Caco-2 (cell line): ENCODE measurements at regions of chr4 and their contacts with region 1.

Region 1: DNA sequence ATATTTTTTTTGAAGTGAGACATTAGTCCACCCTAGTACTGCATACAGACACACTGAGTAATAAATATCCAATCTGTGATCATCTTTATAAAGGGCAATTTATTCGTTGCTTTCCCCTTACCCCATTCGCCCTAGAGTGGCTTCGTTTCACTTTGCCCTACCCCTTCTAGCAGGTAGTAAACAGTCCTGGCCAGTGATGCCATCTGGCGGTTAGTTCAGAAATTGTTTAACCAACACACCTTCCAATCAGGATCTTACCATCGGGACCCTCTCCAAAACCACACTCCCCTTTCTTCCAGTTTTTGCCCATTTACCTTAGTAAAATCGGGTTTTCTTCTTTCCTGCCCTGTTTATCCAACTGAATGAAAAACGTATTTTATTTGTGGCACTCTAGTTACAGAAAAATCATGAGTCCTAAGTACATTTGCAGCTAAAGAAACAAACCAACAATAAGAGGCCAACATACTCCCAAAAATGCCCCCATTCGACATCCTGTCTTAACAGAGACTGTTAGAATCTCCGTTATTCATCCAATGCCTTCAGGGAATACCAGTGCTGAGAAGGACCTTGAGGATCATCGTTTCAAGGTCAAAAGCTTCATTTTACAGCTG is 2.2 kb downstream of the PPA2 start:
- DNase-seq: peak; percentile 69 to 74
- H3K4me3 ChIP-seq: no peak overlapping the region
- H3K4me3 Mint-ChIP-seq: peak overlapping the region; percentile 59
- H3K27ac Mint-ChIP-seq: no peak overlapping the region
- H3K4me1 ChIP-seq: peaks cover 9% of the 10 kb centered on the region
- H3K4me1 Mint-ChIP-seq: peaks cover 8% of the 10 kb centered on the region
- H3K27me3 ChIP-seq: no peaks in the 10 kb centered on the region
- H3K27me3 Mint-ChIP-seq: peaks cover 3% of the 10 kb centered on the region
- CTCF ChIP-seq: peak; percentile 50 to 57

Region 2: GRCh38 chr4:104901438-104901837 is 570.2 kb before region 1 on chr4:
- CTCF ChIA-PET with region 1: interaction called, 3 read pairs
- POLR2A ChIA-PET with region 1: no interaction called
- intact Hi-C with region 1: loop called (anchors 10 kb)
- DNase-seq: no peak
- H3K4me3 ChIP-seq: no peak overlapping the region
- H3K4me3 Mint-ChIP-seq: no peak overlapping the region
- H3K27ac Mint-ChIP-seq: no peak overlapping the region
- H3K4me1 ChIP-seq: no peaks in the 10 kb centered on the region
- H3K4me1 Mint-ChIP-seq: no peaks in the 10 kb centered on the region
- H3K27me3 ChIP-seq: no peaks in the 10 kb centered on the region
- H3K27me3 Mint-ChIP-seq: peaks cover under 1% of the 10 kb centered on the region
- CTCF ChIP-seq: no peak

Region 3: DNA sequence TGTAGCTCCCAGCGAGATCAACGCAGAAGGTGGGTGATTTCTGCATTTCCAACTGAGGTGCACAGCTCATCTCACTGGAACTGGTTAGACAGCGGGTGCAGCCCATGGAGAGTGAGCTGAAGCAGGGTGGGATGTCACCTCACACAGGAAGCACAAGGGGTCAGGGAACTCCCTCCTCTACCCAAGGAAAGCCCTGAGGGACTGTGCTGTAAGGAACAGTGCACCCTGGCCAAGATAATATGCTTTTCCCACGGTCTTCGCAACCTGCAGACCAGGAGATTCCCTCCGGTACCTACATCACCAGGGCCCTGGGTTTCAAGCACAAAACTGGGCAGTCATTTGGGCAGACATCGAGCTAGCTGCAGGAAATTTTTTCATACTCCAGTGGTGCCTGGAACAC is 541.4 kb before region 1 on chr4:
- CTCF ChIA-PET with region 1: interaction called, 4 read pairs
- POLR2A ChIA-PET with region 1: no interaction called
- intact Hi-C with region 1: loop called (anchors 2 kb)
- DNase-seq: no peak
- H3K4me3 ChIP-seq: no peak overlapping the region
- H3K4me3 Mint-ChIP-seq: no peak overlapping the region
- H3K27ac Mint-ChIP-seq: no peak overlapping the region
- H3K4me1 ChIP-seq: peaks cover 4% of the 10 kb centered on the region; the same call in 1 of the 2 replicates
- H3K4me1 Mint-ChIP-seq: no peaks in the 10 kb centered on the region
- H3K27me3 ChIP-seq: no peaks in the 10 kb centered on the region
- H3K27me3 Mint-ChIP-seq: peaks cover 3% of the 10 kb centered on the region
- CTCF ChIP-seq: no peak

Region 4: DNA sequence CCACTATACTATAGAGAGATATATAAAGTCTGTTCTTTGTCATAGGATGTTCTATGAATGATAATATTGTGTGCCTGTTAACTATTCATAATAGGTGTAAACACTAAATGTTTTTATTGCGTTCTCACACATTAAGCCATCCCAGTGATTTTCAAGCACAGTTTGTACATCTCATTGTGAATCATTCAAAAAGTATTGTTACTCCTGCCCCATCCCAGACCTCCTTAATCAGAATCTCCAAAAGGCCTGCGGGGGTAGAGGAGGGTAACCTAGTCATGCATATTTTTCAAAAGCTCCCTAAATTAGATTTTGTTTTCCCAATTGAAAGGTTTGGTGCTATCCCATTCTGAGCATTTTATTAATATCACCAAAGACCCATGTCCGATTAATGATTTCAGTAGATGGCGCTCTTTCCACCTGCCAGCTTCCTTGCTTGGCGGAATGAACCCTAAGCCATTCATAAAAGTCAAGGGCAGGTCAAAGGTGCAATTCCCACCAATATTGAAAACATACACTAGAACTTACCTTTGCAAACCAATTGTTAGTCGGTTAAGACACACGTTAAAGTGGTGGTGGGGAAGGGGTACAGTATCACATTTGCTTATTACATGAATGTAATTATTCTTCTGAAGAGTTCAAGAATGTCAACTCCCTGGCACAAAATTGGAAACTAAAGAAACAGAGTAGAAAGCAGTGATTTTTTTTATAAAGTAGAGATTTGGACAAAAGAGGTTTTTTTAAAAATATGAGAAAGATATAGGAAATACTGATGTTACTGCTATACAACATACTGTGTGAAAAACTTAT is 330.8 kb before region 1 on chr4:
- CTCF ChIA-PET with region 1: interaction called, 4 read pairs
- POLR2A ChIA-PET with region 1: no interaction called
- intact Hi-C with region 1: loop called (anchors 1 kb)
- DNase-seq: peak in 1 of 2 experiments; percentile 49
- H3K4me3 ChIP-seq: no peak overlapping the region
- H3K4me3 Mint-ChIP-seq: no peak overlapping the region
- H3K27ac Mint-ChIP-seq: no peak overlapping the region
- H3K4me1 ChIP-seq: peaks cover under 1% of the 10 kb centered on the region; the same call in 1 of the 2 replicates
- H3K4me1 Mint-ChIP-seq: no peaks in the 10 kb centered on the region
- H3K27me3 ChIP-seq: no peaks in the 10 kb centered on the region
- H3K27me3 Mint-ChIP-seq: peaks cover 2% of the 10 kb centered on the region
- CTCF ChIP-seq: peak; percentile 51 to 54

Region 5: DNA sequence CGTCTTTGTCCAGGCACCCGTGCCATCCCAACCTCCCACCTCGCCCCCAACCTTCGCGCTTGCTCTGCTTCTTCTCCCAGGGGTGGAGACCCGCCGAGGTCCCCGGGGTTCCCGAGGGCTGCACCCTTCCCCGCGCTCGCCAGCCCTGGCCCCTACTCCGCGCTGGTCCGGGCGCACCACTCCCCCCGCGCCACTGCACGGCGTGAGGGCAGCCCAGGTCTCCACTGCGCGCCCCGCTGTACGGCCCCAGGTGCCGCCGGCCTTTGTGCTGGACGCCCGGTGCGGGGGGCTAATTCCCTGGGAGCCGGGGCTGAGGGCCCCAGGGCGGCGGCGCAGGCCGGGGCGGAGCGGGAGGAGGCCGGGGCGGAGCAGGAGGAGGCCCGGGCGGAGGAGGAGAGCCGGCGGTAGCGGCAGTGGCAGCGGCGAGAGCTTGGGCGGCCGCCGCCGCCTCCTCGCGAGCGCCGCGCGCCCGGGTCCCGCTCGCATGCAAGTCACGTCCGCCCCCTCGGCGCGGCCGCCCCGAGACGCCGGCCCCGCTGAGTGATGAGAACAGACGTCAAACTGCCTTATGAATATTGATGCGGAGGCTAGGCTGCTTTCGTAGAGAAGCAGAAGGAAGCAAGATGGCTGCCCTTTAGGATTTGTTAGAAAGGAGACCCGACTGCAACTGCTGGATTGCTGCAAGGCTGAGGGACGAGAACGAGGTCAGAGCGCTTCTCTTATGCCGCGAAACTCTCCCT is 325.2 kb before region 1 on chr4 and contains the start of gene TET2:
- CTCF ChIA-PET with region 1: interaction called, 4 read pairs
- POLR2A ChIA-PET with region 1: no interaction called
- intact Hi-C with region 1: loop called (anchors 1 kb)
- DNase-seq: peak; percentile 75 to 76
- H3K4me3 ChIP-seq: peak within 1 kb of the TSS; percentile 57
- H3K4me3 Mint-ChIP-seq: peak within 1 kb of the TSS; percentile 94
- H3K27ac Mint-ChIP-seq: peak within 1 kb of the TSS; percentile 97
- H3K4me1 ChIP-seq: no peaks in the 10 kb centered on the region; the same call in 1 of the 2 replicates
- H3K4me1 Mint-ChIP-seq: no peaks in the 10 kb centered on the region
- H3K27me3 ChIP-seq: no peaks in the 10 kb centered on the region
- H3K27me3 Mint-ChIP-seq: no peaks in the 10 kb centered on the region
- CTCF ChIP-seq: no peak
- total RNA-seq, gene TET2: 14.8 and 17.7 TPM in 2 replicates

Region 6: GRCh38 chr4:105280338-105281123 is 191.1 kb before region 1 on chr4:
- CTCF ChIA-PET with region 1: no interaction called
- POLR2A ChIA-PET with region 1: no interaction called
- intact Hi-C with region 1: loop called (anchors 5 kb)
- DNase-seq: no peak
- H3K4me3 ChIP-seq: no peak overlapping the region
- H3K4me3 Mint-ChIP-seq: no peak overlapping the region
- H3K27ac Mint-ChIP-seq: no peak overlapping the region
- H3K4me1 ChIP-seq: no peaks in the 10 kb centered on the region
- H3K4me1 Mint-ChIP-seq: no peaks in the 10 kb centered on the region
- H3K27me3 ChIP-seq: no peaks in the 10 kb centered on the region
- H3K27me3 Mint-ChIP-seq: no peaks in the 10 kb centered on the region
- CTCF ChIP-seq: no peak

Region 7: DNA sequence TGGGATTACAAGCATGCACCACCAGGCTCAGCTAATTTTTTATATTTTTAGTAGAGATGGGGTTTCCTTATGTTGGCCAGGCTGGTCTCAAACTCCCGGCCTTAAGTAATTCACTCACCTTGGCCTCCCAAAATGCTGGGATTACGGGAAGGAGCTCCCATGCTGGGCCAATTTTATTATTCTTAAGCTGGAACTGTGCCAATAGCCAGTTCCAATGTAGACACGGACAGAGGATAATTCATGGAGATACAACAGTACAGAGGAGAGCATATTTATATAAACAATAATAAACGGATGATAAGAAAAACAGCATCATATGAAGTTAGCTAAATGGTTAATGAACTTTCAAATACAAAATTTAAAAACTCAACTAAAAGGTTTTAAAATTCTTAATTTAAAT is 85.7 kb before region 1 on chr4:
- CTCF ChIA-PET with region 1: no interaction called
- POLR2A ChIA-PET with region 1: no interaction called
- intact Hi-C with region 1: no loop called
- DNase-seq: no peak
- H3K4me3 ChIP-seq: no peak overlapping the region
- H3K4me3 Mint-ChIP-seq: no peak overlapping the region
- H3K27ac Mint-ChIP-seq: no peak overlapping the region
- H3K4me1 ChIP-seq: no peaks in the 10 kb centered on the region
- H3K4me1 Mint-ChIP-seq: no peaks in the 10 kb centered on the region
- H3K27me3 ChIP-seq: no peaks in the 10 kb centered on the region
- H3K27me3 Mint-ChIP-seq: no peaks in the 10 kb centered on the region
- CTCF ChIP-seq: no peak

Region 8: DNA sequence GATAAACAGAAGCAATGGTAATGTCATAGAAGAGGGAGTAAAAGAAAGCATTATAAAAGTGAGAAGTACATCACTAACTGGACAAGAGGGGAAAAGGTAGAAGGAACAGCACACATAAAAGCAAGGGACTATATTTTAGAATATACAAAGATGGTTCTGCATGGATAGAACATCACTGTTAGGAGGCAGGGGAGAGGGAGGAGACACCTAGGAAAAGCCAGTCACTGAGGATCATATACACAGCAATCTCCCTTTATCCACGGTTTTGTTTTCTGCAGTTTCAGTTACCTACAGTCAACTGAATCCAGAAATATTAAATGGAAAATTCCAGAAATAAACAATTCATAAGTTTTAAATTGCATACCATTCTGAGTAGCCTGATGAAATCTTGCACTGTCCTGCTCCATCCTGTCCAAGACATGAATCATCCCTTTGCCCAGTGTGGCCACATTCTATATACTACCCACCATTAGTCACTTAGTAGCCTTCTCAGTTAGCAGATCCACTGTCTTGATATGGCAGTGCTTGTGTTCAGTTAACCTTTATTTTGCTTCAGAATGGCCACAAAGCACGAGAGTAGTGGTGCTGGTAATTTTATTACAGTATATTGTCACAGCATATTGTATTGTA is 72.0 kb before region 1 on chr4:
- CTCF ChIA-PET with region 1: no interaction called
- POLR2A ChIA-PET with region 1: no interaction called
- intact Hi-C with region 1: loop called (anchors 5 kb)
- DNase-seq: no peak
- H3K4me3 ChIP-seq: no peak overlapping the region
- H3K4me3 Mint-ChIP-seq: no peak overlapping the region
- H3K27ac Mint-ChIP-seq: no peak overlapping the region
- H3K4me1 ChIP-seq: no peaks in the 10 kb centered on the region
- H3K4me1 Mint-ChIP-seq: no peaks in the 10 kb centered on the region
- H3K27me3 ChIP-seq: no peaks in the 10 kb centered on the region
- H3K27me3 Mint-ChIP-seq: no peaks in the 10 kb centered on the region
- CTCF ChIP-seq: no peak